ENCODE measurements at regions of chr1 and their contacts with region 1.

Region 1: DNA sequence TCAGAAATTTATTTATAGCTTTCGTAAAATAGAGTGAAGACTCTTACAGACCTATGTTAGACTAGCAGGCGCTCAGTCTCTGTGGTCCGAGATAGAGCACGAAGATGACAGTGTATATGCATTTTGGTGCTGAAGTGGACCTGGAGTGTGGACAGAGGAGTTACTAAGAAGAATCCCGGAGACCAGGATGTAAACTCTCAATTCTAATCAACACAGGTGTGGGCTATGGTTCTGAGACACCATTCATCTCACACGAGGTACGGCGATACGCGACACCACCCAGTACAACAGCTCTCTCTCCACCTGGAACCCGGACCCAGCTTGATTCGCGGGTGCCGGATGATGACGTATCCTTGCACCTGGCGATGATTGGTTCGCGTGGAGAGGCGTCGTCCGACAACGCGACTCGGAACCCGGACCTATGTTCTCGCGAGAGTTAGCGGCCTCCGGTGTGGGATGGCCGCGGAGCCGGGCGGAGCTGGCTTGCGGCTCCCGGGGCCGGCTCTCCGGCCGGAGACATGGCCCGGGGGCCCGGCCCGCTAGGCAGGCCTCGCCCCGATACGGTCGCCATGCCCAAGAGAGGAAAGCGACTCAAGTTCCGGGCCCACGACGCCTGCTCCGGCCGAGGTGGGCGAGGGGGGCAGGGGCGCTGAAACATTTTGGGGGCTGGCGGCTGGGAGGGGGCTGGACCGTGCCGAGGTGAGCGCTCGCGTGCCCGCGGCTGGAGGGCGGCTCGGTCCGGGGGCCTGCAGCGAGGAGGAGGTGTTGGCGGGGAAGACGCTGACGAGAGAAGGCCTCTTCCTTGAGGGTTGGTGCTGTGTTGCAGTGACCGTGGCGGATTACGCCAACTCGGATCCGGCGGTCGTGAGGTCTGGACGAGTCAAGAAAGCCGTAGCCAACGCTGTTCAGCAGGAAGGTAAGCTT is at the start of gene TMEM183A:
- DNase-seq: peak; percentile 90 to 94
- H3K4me3 ChIP-seq: peak within 1 kb of the TSS; percentile 69
- H3K27ac ChIP-seq: peak within 1 kb of the TSS; percentile 88
- H3K4me1 ChIP-seq: peaks cover 13% of the 10 kb centered on the region; the same call in 1 of the 2 replicates
- H3K27me3 ChIP-seq: no peaks in the 10 kb centered on the region
- CTCF ChIP-seq: no peak
- total RNA-seq, gene TMEM183A: 53.5 and 63.1 TPM in 2 replicates

Region 2: GRCh38 chr1:202954057-202954745 is 53.0 kb before region 1 on chr1:
- CTCF ChIA-PET with region 1: no interaction called
- POLR2A ChIA-PET with region 1: interaction called, 10 read pairs
- intact Hi-C with region 1: no loop called
- DNase-seq: no peak
- H3K4me3 ChIP-seq: no peak overlapping the region
- H3K27ac ChIP-seq: no peak overlapping the region
- H3K4me1 ChIP-seq: peaks cover 21% of the 10 kb centered on the region
- H3K27me3 ChIP-seq: no peaks in the 10 kb centered on the region
- CTCF ChIP-seq: no peak

Region 3: GRCh38 chr1:203152158-203153035 is 145.2 kb after region 1 on chr1:
- CTCF ChIA-PET with region 1: no interaction called
- POLR2A ChIA-PET with region 1: no interaction called
- intact Hi-C with region 1: no loop called
- DNase-seq: peak; percentile 60 to 91
- H3K4me3 ChIP-seq: peak overlapping the region; percentile 36; the same call in 1 of the 2 replicates
- H3K27ac ChIP-seq: peak overlapping the region; percentile 83
- H3K4me1 ChIP-seq: peaks cover 65% of the 10 kb centered on the region
- H3K27me3 ChIP-seq: no peaks in the 10 kb centered on the region
- CTCF ChIP-seq: no peak

Region 4: DNA sequence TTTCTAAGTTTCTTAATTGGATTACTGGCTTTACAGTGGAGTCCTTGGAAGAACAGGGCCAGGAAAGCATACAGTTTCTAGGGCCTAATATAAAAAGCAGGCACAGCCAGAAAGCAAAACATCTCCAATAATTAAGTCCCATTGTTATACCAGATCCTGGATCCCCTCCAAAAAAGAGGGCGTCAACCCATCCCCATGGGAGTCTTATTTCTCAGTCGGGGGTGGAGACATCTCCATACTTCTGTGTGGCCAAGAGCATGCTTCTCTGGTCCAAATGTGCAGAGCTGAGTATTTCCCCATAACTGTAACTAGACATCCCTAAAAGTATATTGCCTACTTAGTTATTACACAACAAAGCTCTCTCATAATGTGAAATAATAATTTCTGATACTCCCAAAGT is 961.5 kb after region 1 on chr1:
- CTCF ChIA-PET with region 1: no interaction called
- POLR2A ChIA-PET with region 1: no interaction called
- intact Hi-C with region 1: no loop called
- DNase-seq: no peak
- H3K4me3 ChIP-seq: no peak overlapping the region
- H3K27ac ChIP-seq: no peak overlapping the region
- H3K4me1 ChIP-seq: no peaks in the 10 kb centered on the region
- H3K27me3 ChIP-seq: no peaks in the 10 kb centered on the region
- CTCF ChIP-seq: no peak